RWPE1 (cell line): ENCODE measurements at regions of chr14 and their contacts with region 1.

Region 1: DNA sequence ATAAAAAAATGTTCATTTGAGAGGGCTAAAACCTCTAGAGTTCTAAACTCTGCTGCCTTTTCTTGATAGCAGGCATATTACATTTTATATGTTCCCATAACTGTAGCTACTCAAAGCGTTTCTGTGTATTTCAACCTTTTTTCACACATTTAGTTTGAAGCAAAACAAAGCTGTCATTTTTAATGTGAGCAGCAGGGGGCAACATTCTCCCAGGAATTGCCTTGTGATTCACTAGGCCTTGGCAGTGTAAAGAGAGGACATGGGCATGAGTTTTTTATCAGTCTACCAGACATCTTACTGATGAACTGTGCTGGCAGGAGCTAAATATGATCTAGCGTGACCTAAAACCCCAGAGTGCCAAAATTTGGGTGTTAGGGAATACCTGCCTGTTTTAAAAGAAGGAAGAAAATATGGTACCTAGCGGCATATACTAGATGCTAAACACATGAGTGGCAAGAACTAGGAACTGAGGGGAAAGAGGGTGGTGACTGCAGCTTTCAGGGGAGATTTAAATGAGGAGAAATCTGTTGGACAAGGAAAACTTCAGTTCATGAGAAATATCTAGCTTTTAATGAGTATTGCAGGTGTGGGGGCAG is 65.3 kb downstream of the IFT43 start:
- DNase-seq: peak; percentile 52
- H3K27ac ChIP-seq: no peak overlapping the region
- CTCF ChIP-seq: peak; percentile 75

Region 2: DNA sequence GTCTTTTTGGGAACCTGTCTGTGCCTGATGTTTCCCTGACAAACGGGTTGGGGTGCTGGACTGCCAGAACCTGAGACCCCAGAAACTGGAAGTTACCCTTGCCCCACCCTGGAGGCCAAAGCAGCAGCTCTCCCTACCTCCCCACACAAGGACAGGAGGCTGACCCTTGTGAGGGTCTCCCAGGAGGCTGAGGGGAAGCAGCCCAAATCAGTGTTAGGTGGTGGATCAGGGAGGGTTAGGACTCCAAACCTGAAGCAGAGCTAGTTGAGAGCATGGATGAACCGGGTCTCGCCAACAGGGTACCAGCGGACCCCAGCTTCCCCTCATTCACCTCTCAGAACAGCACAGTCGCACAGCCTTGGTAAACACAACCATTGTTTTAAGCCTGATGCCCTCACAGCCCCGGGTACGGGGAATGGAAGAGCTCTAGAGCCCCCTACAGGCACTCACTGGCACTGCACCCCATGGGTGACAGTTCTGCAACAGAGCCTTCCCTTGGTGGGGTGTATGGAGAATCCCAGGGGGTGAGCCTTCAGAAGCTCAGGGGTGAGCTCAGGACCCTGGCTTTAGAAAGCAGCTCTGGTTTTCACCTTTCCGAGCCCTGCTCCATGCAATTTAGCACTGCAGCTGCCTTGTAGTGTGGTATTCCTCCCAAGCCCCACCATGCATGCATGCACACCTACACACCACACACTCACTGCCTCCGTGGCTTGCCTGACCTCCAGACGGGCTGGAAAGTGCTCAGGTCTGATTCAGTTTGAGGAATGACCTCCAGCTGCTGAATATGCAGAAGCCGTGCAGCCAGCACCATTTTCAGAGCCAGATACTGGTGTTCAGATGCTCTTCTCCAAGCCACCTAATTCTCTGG is 336.3 kb after region 1 on chr14:
- CTCF ChIA-PET with region 1: interaction called, 12 read pairs
- POLR2A ChIA-PET with region 1: no interaction called
- DNase-seq: peak; percentile 84
- H3K27ac ChIP-seq: no peak overlapping the region
- CTCF ChIP-seq: peak; percentile 90